ENCODE measurements at regions of chr16 and their contacts with region 1.

Region 1: DNA sequence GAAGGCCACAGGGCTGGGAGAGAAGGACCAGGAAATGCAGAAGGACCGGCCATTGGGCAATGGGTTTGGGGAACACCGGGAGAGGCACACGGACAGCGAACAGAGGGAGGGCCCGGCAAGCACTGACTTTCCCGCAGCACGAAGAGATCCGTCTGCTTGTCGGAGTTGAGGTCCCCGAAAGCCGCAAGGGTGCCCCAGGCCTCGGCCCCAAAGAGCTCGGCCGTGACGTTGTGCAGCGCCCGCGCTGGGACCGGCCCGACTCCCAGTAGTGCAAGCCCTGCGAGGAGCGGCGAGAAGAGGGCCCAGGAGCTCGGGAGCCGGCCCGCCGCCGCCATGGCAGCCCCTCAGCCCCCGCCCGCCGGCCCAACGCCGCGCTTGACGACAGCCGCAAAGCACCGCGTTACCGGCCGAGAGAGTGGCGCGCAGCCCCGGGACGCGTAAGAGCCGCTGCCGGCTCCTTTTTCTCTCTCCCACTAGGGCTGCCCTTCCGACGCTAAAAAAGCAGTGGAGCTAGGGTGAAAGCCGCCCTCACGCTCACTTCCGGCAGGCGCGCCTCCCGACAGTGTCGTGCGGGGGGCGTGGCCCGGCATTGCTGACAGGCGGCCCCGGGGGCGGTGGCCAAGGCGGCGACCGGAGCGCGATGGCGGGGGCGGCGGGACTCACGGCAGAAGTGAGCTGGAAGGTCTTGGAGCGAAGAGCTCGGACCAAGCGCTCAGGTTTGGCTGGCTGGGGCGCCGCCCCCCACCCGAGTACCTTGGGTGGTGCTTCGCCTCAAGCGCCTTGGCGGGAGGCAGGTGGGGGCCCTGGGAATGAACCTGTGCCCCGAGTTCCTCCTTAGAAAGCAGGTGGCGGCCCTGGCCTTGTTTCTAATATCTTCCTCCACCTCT is at the starts of genes ITFG1 and PHKB:
- DNase-seq: peak; percentile 96
- H3K4me3 ChIP-seq: peak within 1 kb of the TSS; percentile 89
- H3K27ac ChIP-seq: peak within 1 kb of the TSS; percentile 82
- H3K4me1 ChIP-seq: peaks cover 48% of the 10 kb centered on the region
- CTCF ChIP-seq: 0 out of 2 replicates have a peak, but pooled peaks have one; percentile 4
- total RNA-seq, gene ITFG1: 18.2 and 33.7 TPM in 2 replicates
- total RNA-seq, gene PHKB: 56.9 and 68.1 TPM in 2 replicates

Region 2: GRCh38 chr16:47311738-47312505 is 149.0 kb before region 1 on chr16:
- CTCF ChIA-PET with region 1: no interaction called
- POLR2A ChIA-PET with region 1: interaction called, 7 read pairs
- intact Hi-C with region 1: loop called (anchors 5 kb)
- DNase-seq: peak; percentile 49
- H3K4me3 ChIP-seq: peak overlapping the region; percentile 43
- H3K27ac ChIP-seq: peak overlapping the region; percentile 80
- H3K4me1 ChIP-seq: peaks cover 31% of the 10 kb centered on the region
- CTCF ChIP-seq: no peak

Region 3: DNA sequence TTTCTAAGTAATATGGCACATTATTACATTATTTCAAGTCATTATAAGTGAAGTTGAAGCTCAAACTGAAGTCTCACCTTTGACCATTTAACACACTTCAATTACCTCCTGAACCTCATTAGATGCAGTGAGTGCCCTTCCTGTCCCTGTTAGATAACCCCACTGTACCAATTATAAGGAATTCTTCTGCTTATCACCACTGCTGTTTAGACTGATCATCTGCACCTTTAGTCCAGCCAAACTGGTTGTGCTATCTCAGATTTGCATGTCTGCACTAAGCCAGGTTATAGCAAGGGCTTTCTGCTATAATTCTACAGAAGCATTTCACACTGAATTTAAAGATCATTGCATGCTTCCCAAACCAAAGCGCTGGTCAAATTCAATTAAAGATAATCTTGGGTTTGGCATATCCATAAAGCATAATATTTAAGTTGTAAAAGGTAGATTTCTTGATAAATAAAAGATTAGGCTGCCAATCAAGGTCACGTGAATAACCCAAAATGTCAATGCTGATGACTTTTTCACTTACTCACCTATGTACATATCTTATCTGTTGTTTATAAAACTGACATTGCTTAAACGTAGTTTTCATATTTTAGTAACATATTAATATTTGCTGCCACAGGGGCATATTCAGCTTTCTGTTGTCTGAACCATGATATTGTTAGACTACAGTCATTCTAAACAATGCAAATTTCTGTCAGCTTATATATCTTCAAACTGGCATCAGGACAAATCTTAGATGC is 12.0 kb before region 1 on chr16:
- CTCF ChIA-PET with region 1: no interaction called
- POLR2A ChIA-PET with region 1: interaction called, 11 read pairs
- intact Hi-C with region 1: no loop called
- DNase-seq: no peak
- H3K4me3 ChIP-seq: no peak overlapping the region
- H3K27ac ChIP-seq: no peak overlapping the region
- H3K4me1 ChIP-seq: no peaks in the 10 kb centered on the region
- CTCF ChIP-seq: no peak

Region 4: DNA sequence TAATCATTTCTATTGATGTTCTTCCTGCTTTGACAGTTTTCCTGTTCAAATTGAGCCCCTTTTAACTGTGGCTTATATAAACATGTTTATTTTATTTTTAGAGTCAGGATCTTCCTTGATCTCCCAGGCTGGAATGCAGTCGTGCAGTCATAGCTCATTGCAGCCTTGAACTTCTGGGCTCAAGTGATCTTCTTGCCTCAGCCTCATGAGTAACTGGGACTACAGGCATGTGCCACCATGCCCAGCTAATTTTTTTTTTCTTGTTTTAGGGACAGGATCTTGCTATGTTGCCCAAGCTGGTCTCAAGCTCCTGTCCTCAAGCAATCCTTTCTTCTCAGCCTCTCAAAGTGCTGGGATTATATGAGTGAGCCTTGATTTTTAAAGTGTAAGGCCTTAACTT is 14.8 kb after region 1 on chr16:
- CTCF ChIA-PET with region 1: interaction called, 4 read pairs
- POLR2A ChIA-PET with region 1: interaction called, 120 read pairs
- intact Hi-C with region 1: no loop called
- DNase-seq: no peak
- H3K4me3 ChIP-seq: no peak overlapping the region
- H3K27ac ChIP-seq: no peak overlapping the region
- H3K4me1 ChIP-seq: no peaks in the 10 kb centered on the region
- CTCF ChIP-seq: no peak

Region 5: DNA sequence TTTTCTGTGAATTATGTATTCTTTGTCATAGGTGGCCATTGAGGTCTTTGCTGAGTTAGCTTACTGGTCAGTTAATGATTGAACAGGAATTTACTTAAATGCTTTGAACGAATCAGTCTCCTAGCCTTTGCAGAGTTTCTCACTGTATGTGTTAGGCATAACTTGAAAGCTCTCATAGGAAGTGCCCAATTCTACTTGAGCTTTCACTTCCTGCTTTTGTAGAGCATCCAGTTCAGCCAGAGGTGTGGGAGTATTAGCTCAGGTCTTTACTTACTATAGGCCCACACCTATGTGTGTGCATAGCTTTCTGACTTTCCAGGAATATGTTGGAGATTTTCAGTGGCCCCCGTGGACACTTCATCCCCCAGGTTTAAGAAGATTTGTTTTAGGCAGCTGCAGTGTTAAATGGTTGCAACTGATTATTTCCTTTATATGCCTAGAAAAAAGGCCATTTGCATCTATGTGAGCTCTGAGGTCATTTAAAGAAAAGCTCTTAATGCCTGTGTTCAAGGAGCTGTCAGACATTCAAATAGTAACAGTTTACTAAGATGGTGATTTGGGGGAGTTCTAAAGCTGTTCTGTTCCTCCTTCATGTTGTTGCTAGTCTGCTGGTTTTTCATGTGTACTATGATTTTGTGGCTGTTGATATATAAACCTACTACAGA is 62.5 kb after region 1 on chr16:
- CTCF ChIA-PET with region 1: no interaction called
- POLR2A ChIA-PET with region 1: interaction called, 5 read pairs
- intact Hi-C with region 1: loop called (anchors 5 kb)
- DNase-seq: peak; percentile 77
- H3K4me3 ChIP-seq: no peak overlapping the region
- H3K27ac ChIP-seq: no peak overlapping the region
- H3K4me1 ChIP-seq: peaks cover 14% of the 10 kb centered on the region
- CTCF ChIP-seq: no peak

Region 6: DNA sequence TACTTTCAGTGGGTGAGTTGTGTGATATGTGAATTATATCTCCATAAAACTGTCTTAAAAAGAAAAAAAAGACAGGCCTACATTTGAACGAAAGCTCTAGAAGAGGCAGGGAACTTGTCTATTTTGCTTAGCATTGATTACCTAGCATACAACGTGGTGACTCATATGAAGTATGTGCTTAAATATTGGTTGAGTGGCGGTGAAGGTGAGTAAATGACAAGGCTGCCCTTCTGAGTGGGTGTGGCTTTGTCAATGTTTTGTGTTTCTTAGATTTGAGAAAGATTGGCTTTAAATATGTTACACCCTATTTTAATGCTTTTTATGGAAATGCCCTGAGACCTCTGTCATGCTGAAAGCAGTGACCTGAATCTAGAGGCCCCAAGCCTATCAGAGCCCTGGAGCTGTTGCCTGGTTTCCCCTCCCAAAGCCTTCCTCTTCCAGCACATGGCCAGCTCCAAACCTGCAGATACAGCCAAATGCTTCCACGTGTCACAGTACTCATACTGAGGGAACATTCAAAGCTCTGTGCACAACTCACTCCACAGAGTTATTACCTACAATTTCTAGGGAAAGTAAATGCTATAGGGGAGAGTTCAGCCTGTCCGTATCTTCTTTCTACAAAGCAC is 260.2 kb after region 1 on chr16:
- CTCF ChIA-PET with region 1: no interaction called
- POLR2A ChIA-PET with region 1: no interaction called
- intact Hi-C with region 1: no loop called
- DNase-seq: no peak
- H3K4me3 ChIP-seq: no peak overlapping the region
- H3K27ac ChIP-seq: no peak overlapping the region
- H3K4me1 ChIP-seq: no peaks in the 10 kb centered on the region
- CTCF ChIP-seq: no peak

Region 7: GRCh38 chr16:48164907-48165726 is 704.2 kb after region 1 on chr16:
- CTCF ChIA-PET with region 1: no interaction called
- POLR2A ChIA-PET with region 1: no interaction called
- intact Hi-C with region 1: loop called (anchors 10 kb)
- DNase-seq: peak; percentile 53
- H3K4me3 ChIP-seq: no peak overlapping the region
- H3K27ac ChIP-seq: no peak overlapping the region
- H3K4me1 ChIP-seq: no peaks in the 10 kb centered on the region
- CTCF ChIP-seq: peak; percentile 88

Region 8: DNA sequence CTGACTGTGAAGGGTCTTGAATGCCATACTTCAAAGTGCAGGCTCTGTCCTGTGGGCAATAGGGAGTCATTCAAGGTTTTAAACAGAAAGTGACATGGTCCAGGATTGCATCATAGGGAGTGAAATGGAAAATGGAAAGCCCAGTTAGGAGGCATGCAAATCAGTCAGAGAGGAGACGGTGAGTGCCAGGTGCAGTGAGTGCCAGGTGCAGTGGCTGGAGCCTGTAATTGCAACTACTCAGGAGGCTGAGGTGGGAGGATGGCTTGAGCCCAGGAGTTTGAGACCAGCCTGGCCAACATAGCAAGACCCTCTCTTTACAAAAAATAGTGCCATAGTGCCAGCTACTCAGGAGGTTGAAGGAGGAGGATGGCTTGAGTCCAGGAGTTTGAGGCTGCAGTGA is 959.5 kb after region 1 on chr16:
- CTCF ChIA-PET with region 1: no interaction called
- POLR2A ChIA-PET with region 1: no interaction called
- intact Hi-C with region 1: no loop called
- DNase-seq: no peak
- H3K4me3 ChIP-seq: no peak overlapping the region
- H3K27ac ChIP-seq: no peak overlapping the region
- H3K4me1 ChIP-seq: peaks cover 2% of the 10 kb centered on the region
- CTCF ChIP-seq: no peak